A549 (cell line): ENCODE measurements at regions of chr2 and their contacts with region 1.

Region 1: DNA sequence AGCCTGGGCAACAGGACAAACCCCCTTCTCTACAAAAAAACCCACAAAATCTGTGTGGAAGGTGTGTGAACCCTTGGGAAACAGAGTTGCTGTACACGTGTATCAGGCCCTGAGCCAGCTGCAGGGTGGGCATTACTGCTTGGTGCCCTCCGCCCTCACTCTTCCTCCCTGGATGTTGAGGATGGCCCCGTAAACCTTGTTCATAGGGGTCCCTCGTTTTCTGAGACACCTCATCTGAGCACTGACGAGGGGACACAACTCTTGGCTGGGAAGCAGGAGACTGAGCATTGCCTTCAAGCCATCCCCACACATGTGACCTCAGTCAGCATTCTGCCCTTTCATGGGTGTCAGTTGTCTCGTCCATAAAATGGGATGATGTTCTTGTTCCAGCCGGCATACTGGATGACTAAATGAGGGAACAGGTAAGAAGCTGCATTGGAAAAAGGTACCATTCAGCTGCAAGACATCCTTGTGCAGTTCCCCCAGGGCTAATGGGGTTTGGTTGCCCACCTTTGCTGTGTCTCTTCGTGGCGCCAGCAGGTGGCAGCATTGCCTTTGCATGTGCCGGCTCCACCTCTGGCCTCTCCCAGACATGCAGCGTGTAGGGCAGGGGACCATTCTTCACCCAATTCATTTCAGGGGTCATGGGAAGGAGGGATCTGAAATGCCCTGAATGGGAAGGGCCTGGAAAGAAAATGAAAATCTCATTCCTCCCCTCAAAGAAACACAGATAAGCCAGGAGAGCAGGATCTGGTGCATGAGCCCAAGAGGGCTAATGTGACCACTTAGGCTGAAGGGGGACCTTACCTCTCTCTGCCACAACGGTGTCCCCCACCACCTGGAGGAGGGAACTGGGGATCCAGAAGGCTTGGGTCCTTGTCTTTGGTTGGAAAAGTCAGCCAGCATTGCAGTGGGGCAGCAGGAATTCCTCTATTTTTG is 36.4 kb upstream of the HAAO start:
- DNase-seq: peak; percentile 80 to 96
- ATAC-seq: peak; percentile 89 to 96
- H3K4me3 ChIP-seq: no peak overlapping the region
- H3K27ac ChIP-seq: peak overlapping the region; percentile 9 to 57; a peak in 5 of 6 replicates
- H3K4me1 ChIP-seq: peaks cover 15% of the 10 kb centered on the region
- CTCF ChIP-seq: peak; percentile 93
- EP300 ChIP-seq: no peak
- POLR2A ChIP-seq: no peak
- RAD21 ChIP-seq: peak; percentile 87 to 93

Region 2: GRCh38 chr2:42725657-42726056 is 103.1 kb before region 1 on chr2:
- CTCF ChIA-PET with region 1: no interaction called
- POLR2A ChIA-PET with region 1: no interaction called
- DNase-seq: no peak
- ATAC-seq: peak; percentile 30 to 35; a peak in 3 of 6 replicates
- H3K4me3 ChIP-seq: no peak overlapping the region
- H3K27ac ChIP-seq: no peak overlapping the region
- H3K4me1 ChIP-seq: no peaks in the 10 kb centered on the region
- CTCF ChIP-seq: no peak
- EP300 ChIP-seq: no peak
- POLR2A ChIP-seq: no peak
- RAD21 ChIP-seq: no peak

Region 3: GRCh38 chr2:42844901-42845821 is 16.4 kb after region 1 on chr2:
- CTCF ChIA-PET with region 1: interaction called, 28 read pairs
- POLR2A ChIA-PET with region 1: no interaction called
- DNase-seq: no peak
- ATAC-seq: no peak
- H3K4me3 ChIP-seq: no peak overlapping the region
- H3K27ac ChIP-seq: no peak overlapping the region
- H3K4me1 ChIP-seq: no peaks in the 10 kb centered on the region
- CTCF ChIP-seq: no peak
- EP300 ChIP-seq: no peak
- POLR2A ChIP-seq: no peak
- RAD21 ChIP-seq: no peak

Region 4: DNA sequence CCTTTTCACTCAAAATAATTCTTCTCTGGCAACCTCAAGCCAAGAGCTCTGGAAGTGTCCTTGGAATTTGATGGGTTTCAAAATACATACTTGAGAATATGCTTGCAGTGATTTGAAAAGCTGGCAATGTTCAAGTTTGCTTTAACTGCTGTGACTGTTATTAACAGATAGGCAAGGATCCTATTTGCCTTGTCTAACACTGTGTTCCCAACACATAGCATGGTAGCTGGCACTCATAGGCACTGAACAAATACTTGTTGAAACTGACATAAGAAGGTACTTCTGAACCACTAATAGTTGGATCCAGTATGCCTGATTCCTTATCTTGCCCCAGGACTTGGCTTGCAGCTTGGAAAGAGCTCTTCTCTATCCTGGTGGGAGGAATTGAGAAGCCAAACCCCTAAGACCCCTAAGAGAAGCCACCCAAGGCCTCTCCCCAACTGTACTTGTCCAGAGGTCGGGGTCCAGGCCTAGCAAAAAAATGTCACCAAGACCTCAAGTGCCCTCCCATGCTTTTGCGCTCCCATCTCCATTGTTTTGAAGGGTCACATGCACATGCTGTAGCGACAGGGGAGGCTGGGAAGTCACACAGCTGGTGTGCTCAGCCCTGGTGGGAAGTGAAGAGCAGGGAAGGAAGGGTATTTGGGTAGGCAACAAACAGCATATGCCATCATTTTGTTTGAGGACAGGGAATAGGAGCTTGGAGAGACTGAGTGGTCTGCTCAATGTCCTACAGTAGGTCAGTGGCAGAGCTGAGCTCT is 82.1 kb after region 1 on chr2:
- CTCF ChIA-PET with region 1: interaction called, 17 read pairs
- POLR2A ChIA-PET with region 1: no interaction called
- DNase-seq: no peak
- ATAC-seq: no peak
- H3K4me3 ChIP-seq: no peak overlapping the region
- H3K27ac ChIP-seq: no peak overlapping the region
- H3K4me1 ChIP-seq: peaks cover 14% of the 10 kb centered on the region
- CTCF ChIP-seq: no peak
- EP300 ChIP-seq: no peak
- POLR2A ChIP-seq: no peak
- RAD21 ChIP-seq: no peak

Region 5: GRCh38 chr2:42944779-42945415 is 116.1 kb after region 1 on chr2:
- CTCF ChIA-PET with region 1: interaction called, 88 read pairs
- POLR2A ChIA-PET with region 1: no interaction called
- DNase-seq: peak; percentile 44 to 60
- ATAC-seq: peak; percentile 48 to 79; a peak in 4 of 6 replicates
- H3K4me3 ChIP-seq: no peak overlapping the region
- H3K27ac ChIP-seq: no peak overlapping the region
- H3K4me1 ChIP-seq: no peaks in the 10 kb centered on the region
- CTCF ChIP-seq: no peak
- EP300 ChIP-seq: no peak
- POLR2A ChIP-seq: no peak
- RAD21 ChIP-seq: no peak

Region 6: GRCh38 chr2:43542285-43542937 is 713.7 kb after region 1 on chr2:
- CTCF ChIA-PET with region 1: interaction called, 28 read pairs
- POLR2A ChIA-PET with region 1: no interaction called
- DNase-seq: peak; percentile 28 to 55
- ATAC-seq: peak; percentile 56 to 71; a peak in 3 of 6 replicates
- H3K4me3 ChIP-seq: no peak overlapping the region
- H3K27ac ChIP-seq: peak overlapping the region in 1 of 2 experiments; percentile 63; a peak in 1 of 6 replicates
- H3K4me1 ChIP-seq: peaks cover 29% of the 10 kb centered on the region
- CTCF ChIP-seq: peak; percentile 81
- EP300 ChIP-seq: no peak
- POLR2A ChIP-seq: no peak
- RAD21 ChIP-seq: peak; percentile 77 to 86